ENCODE measurements at regions of chr7 and their contacts with region 1.

Region 1: DNA sequence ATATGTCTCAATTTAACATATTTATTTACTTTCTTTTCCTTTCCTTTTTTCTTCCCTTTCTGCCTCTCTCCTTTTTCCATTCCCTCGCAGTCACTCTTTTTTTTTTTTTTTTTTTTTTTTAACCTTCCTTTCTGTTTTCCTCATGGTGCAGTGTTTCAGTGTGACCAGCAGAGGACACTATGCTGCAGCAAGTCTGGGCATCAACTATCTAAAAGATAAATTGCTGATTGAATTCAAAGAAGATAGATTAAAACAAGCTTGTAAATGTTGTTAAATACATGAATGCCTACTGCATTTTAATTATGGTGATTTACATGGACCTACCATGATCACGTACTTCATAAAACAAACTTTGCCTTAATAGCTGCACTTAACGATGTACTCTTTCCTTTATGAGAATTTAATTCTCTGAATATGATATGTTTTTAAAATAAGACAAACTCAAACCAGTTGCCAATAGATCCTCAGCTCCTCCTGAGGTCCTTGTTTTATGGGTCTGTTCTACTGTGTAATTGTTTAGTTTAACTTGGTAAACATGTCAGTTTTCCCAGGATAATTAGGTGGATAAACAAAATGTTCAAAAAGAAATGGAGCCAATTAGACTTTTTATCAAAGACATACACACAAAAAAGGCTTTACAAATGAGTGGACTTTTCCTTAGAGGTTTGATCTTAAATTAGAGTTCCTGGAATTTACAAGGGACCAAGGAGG is 101.0 kb upstream of the AGR3 start:
- DNase-seq: peak; percentile 38
- H3K4me3 ChIP-seq: no peak overlapping the region
- H3K27ac ChIP-seq: no peak overlapping the region
- H3K4me1 ChIP-seq: no peaks in the 10 kb centered on the region
- CTCF ChIP-seq: peak; percentile 91

Region 2: GRCh38 chr7:16958724-16959123 is 24.1 kb before region 1 on chr7:
- CTCF ChIA-PET with region 1: no interaction called
- POLR2A ChIA-PET with region 1: no interaction called
- intact Hi-C with region 1: no loop called
- DNase-seq: no peak
- H3K4me3 ChIP-seq: no peak overlapping the region
- H3K27ac ChIP-seq: no peak overlapping the region
- H3K4me1 ChIP-seq: no peaks in the 10 kb centered on the region
- CTCF ChIP-seq: no peak

Region 3: DNA sequence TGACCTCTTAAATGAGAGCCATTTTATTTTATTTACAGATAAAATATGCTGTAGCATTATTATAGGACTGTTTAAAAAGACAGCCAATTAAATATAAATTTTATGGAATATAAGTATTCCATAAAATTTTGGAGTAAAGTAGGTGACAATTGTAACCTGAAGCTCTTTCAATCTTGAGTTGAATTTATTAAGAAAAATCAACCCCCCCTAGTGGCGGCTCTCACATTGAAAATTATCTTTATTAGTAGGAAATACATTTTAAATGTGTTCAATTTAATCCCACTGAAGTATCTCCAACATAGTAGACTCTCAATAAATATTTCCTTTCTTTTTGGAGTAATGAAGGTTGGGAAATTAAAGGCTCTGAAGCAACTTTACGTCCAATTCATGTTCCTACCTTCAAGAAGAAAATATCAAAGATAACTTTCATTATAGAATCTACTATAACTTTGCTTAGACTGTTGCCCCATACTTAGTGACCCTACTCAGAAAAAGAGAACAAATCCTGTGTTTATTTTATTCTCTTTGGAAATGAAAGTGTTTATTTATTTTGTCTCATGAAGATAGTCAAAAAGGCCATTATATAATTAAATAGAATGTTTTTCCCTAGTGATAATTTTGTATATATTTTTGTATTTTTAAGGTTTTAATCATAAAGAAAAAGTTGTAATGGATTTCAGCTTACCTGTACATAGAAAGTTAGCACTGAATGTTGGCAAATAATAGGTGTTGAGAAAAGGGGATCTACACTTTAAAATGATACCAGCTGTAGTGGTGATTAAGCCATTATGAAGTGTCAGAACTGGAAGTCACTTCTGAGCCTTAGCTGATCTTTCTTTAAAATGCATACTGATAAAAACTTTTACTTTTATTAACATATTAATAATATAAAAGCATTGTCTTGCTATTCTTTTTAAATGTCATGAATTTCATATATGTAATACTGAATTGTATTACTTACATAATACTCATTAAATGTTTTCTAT is 319.0 kb after region 1 on chr7:
- CTCF ChIA-PET with region 1: no interaction called
- POLR2A ChIA-PET with region 1: no interaction called
- intact Hi-C with region 1: loop called (anchors 5 kb)
- DNase-seq: peak; percentile 26
- H3K4me3 ChIP-seq: no peak overlapping the region
- H3K27ac ChIP-seq: no peak overlapping the region
- H3K4me1 ChIP-seq: no peaks in the 10 kb centered on the region
- CTCF ChIP-seq: peak; percentile 86

Measured in OCI-LY7 (cell line).